ENCODE measurements at regions of chr7 and their contacts with region 1.

Region 1: GRCh38 chr7:95871078-95871782 is 98.9 kb downstream of the DYNC1I1 start:
- DNase-seq: no peak
- H3K4me3 ChIP-seq: no peak overlapping the region
- H3K27ac ChIP-seq: no peak overlapping the region
- H3K4me1 ChIP-seq: peaks cover 0 to 12% (median 8%) of the 10 kb centered on the region in 4 donors
- H3K27me3 ChIP-seq: no peaks in the 10 kb centered on the region
- CTCF ChIP-seq: peak; percentile 55 to 64 (median 56)
- EP300 ChIP-seq: no peak
- POLR2A ChIP-seq: no peak

Region 2: GRCh38 chr7:95511716-95512260 is 359.4 kb before region 1 on chr7:
- intact Hi-C with region 1: loop called (anchors 10 kb)
- DNase-seq: peak; percentile 94
- H3K4me3 ChIP-seq: no peak overlapping the region
- H3K27ac ChIP-seq: no peak overlapping the region
- H3K4me1 ChIP-seq: peaks cover 0 to 5% (median 4%) of the 10 kb centered on the region in 4 donors
- H3K27me3 ChIP-seq: peaks cover 0 to 13% (median 0%) of the 10 kb centered on the region in 4 donors
- CTCF ChIP-seq: peak; percentile 80 to 94 (median 87)
- EP300 ChIP-seq: no peak
- POLR2A ChIP-seq: no peak

Region 3: GRCh38 chr7:95723592-95724180 is 147.5 kb before region 1 on chr7:
- intact Hi-C with region 1: loop called (anchors 2 kb)
- DNase-seq: no peak
- H3K4me3 ChIP-seq: no peak overlapping the region
- H3K27ac ChIP-seq: no peak overlapping the region
- H3K4me1 ChIP-seq: no peaks in the 10 kb centered on the region
- H3K27me3 ChIP-seq: peaks cover 0 to 13% (median 0%) of the 10 kb centered on the region in 4 donors
- CTCF ChIP-seq: peak; percentile 39 to 41 (median 39)
- EP300 ChIP-seq: no peak
- POLR2A ChIP-seq: no peak

Region 4: DNA sequence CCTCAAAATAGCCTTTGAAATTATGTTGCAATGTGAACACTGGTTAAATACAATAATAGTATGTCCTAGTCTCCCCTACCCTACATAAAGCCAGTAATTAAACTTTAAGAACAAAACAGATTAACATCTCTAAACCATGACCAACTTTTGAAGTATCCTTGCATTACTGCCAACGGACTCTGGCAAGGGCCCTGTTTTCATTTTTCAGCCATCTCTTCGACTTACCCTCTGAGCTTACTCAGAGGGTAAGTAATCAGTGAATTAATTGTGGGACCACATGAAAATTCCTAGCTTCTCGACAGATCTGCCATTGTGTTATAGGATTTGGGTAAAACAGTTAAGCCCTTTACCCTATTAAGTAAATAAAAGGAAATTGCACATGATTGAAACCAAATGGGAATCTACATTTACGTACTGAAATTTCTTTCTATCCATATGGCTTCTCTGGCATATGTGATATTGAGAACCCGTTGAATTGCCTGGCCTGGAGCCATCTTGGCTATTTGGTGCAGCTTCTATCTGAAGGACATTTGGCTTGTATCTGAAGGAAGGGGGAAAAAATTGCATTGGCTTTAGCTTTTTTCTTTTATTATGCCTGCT is 59.3 kb before region 1 on chr7:
- intact Hi-C with region 1: no loop called
- DNase-seq: no peak
- H3K4me3 ChIP-seq: no peak overlapping the region
- H3K27ac ChIP-seq: no peak overlapping the region
- H3K4me1 ChIP-seq: peaks cover 0 to 3% (median 0%) of the 10 kb centered on the region in 4 donors
- H3K27me3 ChIP-seq: no peaks in the 10 kb centered on the region
- CTCF ChIP-seq: no peak
- EP300 ChIP-seq: no peak
- POLR2A ChIP-seq: no peak

Measured in esophagus muscularis mucosa (tissue), 4 donors.